ENCODE measurements at regions of chr2 and their contacts with region 1.

Region 1: GRCh38 chr2:23791030-23791429 is 135.9 kb downstream of the ATAD2B start:
- DNase-seq: peak; percentile 82
- ATAC-seq: peak; percentile 53
- H3K4me3 ChIP-seq: no peak overlapping the region
- H3K27ac ChIP-seq: peak overlapping the region; percentile 93
- H3K4me1 ChIP-seq: peaks cover 48% of the 10 kb centered on the region
- H3K27me3 ChIP-seq: no peaks in the 10 kb centered on the region
- CTCF ChIP-seq: no peak

Region 2: GRCh38 chr2:23803965-23804542 is 13.0 kb after region 1 on chr2:
- CTCF ChIA-PET with region 1: no interaction called
- POLR2A ChIA-PET with region 1: interaction called, 3 read pairs
- intact Hi-C with region 1: loop called (anchors 1 kb)
- DNase-seq: peak; percentile 65
- ATAC-seq: peak; percentile 50
- H3K4me3 ChIP-seq: no peak overlapping the region
- H3K27ac ChIP-seq: peak overlapping the region; percentile 40
- H3K4me1 ChIP-seq: peaks cover 26% of the 10 kb centered on the region
- H3K27me3 ChIP-seq: no peaks in the 10 kb centered on the region
- CTCF ChIP-seq: peak; percentile 65

Region 3: GRCh38 chr2:24544456-24545115 is 753.6 kb after region 1 on chr2:
- CTCF ChIA-PET with region 1: no interaction called
- POLR2A ChIA-PET with region 1: no interaction called
- intact Hi-C with region 1: no loop called
- DNase-seq: no peak
- ATAC-seq: no peak
- H3K4me3 ChIP-seq: no peak overlapping the region
- H3K27ac ChIP-seq: no peak overlapping the region
- H3K4me1 ChIP-seq: peaks cover 3% of the 10 kb centered on the region; the same call in 1 of the 2 replicates
- H3K27me3 ChIP-seq: no peaks in the 10 kb centered on the region
- CTCF ChIP-seq: no peak